WTC11 (cell line): ENCODE measurements at regions of chr1 and their contacts with region 1.

Region 1: GRCh38 chr1:228457396-228458176 is 29.6 kb upstream of the RNF187 start:
- DNase-seq: peak; percentile 87
- ATAC-seq: peak; percentile 90
- H3K4me3 Mint-ChIP-seq: peak overlapping the region; percentile 96
- H3K27ac Mint-ChIP-seq: peak overlapping the region; percentile 100
- H3K4me1 Mint-ChIP-seq: peaks cover 33% of the 10 kb centered on the region
- H3K27me3 Mint-ChIP-seq: peaks cover 11% of the 10 kb centered on the region
- CTCF ChIP-seq: 0 out of 2 replicates have a peak, but pooled peaks have one; percentile 16

Region 2: GRCh38 chr1:228405987-228406265 is 51.7 kb before region 1 on chr1:
- CTCF ChIA-PET with region 1: interaction called, 6 read pairs
- POLR2A ChIA-PET with region 1: interaction called, 52 read pairs
- DNase-seq: no peak
- ATAC-seq: no peak
- H3K4me3 Mint-ChIP-seq: peak overlapping the region; percentile 94
- H3K27ac Mint-ChIP-seq: peak overlapping the region; percentile 86; the same call in 1 of the 2 replicates
- H3K4me1 Mint-ChIP-seq: peaks cover 24% of the 10 kb centered on the region
- H3K27me3 Mint-ChIP-seq: no peaks in the 10 kb centered on the region
- CTCF ChIP-seq: no peak

Region 3: DNA sequence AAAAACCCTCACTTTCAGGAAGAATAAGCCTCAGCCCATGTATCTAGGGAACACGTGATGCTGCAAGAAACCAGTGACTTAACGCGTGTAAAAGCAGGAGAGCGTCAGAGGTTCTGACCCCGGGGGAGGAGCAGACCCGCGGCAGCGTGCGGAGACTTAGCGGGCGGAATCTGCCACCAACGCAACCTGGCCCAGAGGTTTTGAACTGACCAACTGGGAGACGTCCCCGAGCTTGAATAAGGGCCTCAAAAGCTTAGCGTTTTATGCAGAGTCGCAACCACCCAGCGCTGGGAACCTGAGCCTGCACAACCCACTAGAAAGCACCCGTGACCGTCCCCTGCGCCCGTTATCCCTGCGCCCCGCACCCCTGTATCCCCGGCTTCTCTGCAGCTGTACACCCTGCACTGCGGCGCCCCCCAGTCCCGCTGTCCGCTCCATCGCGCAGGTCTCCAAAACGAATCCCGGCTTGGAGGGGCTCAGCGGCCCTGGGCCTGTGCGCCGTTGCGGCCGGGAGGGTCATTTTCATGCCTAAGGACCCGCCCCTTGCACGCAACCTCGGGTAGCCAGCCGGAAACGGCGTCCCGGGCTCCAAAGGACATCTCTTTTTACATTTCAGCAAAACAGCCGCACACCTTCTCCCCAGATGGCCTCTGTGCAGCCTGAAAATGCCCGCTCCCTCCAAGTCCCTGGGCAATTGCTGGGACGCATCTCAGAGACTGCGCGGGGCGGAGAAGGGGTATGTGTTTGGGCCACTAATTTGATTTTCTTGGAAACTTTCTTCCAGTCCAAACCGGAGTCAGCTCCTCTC is 11.5 kb before region 1 on chr1:
- CTCF ChIA-PET with region 1: interaction called, 5 read pairs
- POLR2A ChIA-PET with region 1: interaction called, 19 read pairs
- DNase-seq: peak; percentile 77
- ATAC-seq: peak; percentile 80
- H3K4me3 Mint-ChIP-seq: peak overlapping the region; percentile 85
- H3K27ac Mint-ChIP-seq: no peak overlapping the region
- H3K4me1 Mint-ChIP-seq: peaks cover 16% of the 10 kb centered on the region
- H3K27me3 Mint-ChIP-seq: peaks cover 76% of the 10 kb centered on the region
- CTCF ChIP-seq: no peak

Region 4: GRCh38 chr1:228471762-228472398 is 14.3 kb after region 1 on chr1:
- CTCF ChIA-PET with region 1: interaction called, 12 read pairs
- POLR2A ChIA-PET with region 1: interaction called, 6 read pairs
- DNase-seq: no peak
- ATAC-seq: peak; percentile 61
- H3K4me3 Mint-ChIP-seq: no peak overlapping the region
- H3K27ac Mint-ChIP-seq: no peak overlapping the region
- H3K4me1 Mint-ChIP-seq: peaks cover 45% of the 10 kb centered on the region
- H3K27me3 Mint-ChIP-seq: peaks cover 42% of the 10 kb centered on the region
- CTCF ChIP-seq: peak; percentile 34; the same call in 1 of the 2 replicates

Region 5: GRCh38 chr1:228478912-228479711 is 21.5 kb after region 1 on chr1:
- CTCF ChIA-PET with region 1: interaction called, 3 read pairs
- POLR2A ChIA-PET with region 1: interaction called, 11 read pairs
- DNase-seq: peak; percentile 69
- ATAC-seq: peak; percentile 55
- H3K4me3 Mint-ChIP-seq: peak overlapping the region; percentile 38
- H3K27ac Mint-ChIP-seq: peak overlapping the region; percentile 96
- H3K4me1 Mint-ChIP-seq: peaks cover 58% of the 10 kb centered on the region
- H3K27me3 Mint-ChIP-seq: peaks cover 11% of the 10 kb centered on the region
- CTCF ChIP-seq: no peak

Region 6: DNA sequence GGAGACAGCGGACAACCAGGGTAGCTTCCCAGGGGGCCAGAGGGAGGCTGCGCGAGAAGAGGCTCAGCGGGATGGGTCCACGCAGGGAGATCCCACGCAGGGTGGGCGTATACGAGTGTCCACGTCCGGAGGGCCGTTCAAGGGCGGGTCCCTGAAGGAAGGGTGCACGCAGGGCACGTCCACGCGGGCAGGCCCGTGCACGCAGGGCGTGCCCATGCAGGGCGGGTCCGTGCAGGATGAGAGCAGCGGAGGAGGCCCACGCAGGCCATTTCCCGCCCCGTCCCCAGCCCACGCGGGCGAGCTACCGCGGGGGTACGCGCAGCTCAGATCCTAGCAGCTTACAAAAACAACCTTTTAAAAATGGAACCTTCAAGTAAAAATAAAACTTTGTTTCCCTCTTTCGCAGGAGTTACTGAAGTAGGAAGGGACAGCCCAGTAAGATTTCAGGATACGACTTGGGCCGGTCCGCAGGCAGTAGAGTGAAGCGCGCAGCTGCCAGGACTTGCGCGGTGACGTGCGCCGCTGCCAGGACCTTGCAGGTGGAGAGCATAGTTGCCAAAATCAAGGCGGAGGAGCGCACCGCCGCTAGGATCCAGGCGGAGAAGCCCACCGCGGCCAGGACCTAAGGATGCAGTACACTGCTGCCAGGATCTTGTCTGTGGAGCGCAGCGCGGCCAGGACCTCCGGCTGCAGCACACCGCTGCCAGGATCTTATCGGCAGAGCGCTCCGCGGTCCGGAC is 29.2 kb after region 1 on chr1:
- CTCF ChIA-PET with region 1: interaction called, 7 read pairs
- POLR2A ChIA-PET with region 1: interaction called, 19 read pairs
- DNase-seq: peak; percentile 92
- ATAC-seq: peak; percentile 91
- H3K4me3 Mint-ChIP-seq: peak overlapping the region; percentile 95
- H3K27ac Mint-ChIP-seq: peak overlapping the region; percentile 100
- H3K4me1 Mint-ChIP-seq: peaks cover 5% of the 10 kb centered on the region; the same call in 1 of the 2 replicates
- H3K27me3 Mint-ChIP-seq: no peaks in the 10 kb centered on the region; the same call in 1 of the 2 replicates
- CTCF ChIP-seq: no peak